ENCODE measurements at regions of chr6 and their contacts with region 1.

Region 1: DNA sequence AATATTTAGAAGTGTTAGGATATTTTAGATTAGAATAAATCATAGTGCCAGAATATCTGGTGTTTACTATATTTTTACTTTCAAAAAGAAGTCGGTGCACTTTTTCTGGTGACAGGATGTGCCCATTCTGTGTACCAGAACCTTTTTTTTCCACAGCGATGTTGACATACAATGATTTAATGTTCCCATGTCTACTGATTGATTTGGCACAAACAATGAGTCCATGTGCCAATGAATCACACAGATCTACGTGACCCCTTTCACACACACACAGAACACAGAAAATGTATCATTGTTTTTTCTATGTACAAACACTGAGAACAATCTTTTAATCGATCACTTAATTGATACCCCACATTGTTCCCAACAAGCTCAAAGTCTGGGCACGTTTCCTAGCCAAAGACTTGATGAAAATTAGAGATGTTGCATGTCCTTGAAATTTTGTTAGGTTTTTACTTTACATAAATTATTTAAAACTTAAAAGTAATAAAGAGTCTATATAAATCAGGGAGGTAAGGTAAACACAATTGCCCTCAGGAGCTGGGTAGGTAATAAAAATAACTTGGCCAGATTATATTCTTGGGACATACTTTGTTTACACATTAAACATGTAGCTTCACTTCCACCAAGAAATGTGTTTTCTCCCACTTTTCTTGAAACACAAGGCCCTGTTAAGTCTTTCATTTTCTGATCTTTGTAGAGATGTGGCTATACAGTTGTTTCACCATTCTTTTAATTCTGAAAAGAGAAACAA is 36.4 kb upstream of the SOX4 start:
- DNase-seq: no peak
- H3K4me3 ChIP-seq: no peak overlapping the region
- H3K27me3 ChIP-seq: no peaks in the 10 kb centered on the region
- CTCF ChIP-seq: no peak

Region 2: GRCh38 chr6:21317642-21318041 is 239.5 kb before region 1 on chr6:
- CTCF ChIA-PET with region 1: no interaction called
- POLR2A ChIA-PET with region 1: interaction called, 17 read pairs
- DNase-seq: no peak
- H3K4me3 ChIP-seq: no peak overlapping the region
- H3K27me3 ChIP-seq: 0 out of 2 replicates have a peak, but pooled peaks cover 2% of the 10 kb centered on the region
- CTCF ChIP-seq: no peak

Measured in BJ (cell line).